Posterior vena cava (tissue), 2 donors: ENCODE measurements at regions of chr17 and their contacts with region 1.

Region 1: DNA sequence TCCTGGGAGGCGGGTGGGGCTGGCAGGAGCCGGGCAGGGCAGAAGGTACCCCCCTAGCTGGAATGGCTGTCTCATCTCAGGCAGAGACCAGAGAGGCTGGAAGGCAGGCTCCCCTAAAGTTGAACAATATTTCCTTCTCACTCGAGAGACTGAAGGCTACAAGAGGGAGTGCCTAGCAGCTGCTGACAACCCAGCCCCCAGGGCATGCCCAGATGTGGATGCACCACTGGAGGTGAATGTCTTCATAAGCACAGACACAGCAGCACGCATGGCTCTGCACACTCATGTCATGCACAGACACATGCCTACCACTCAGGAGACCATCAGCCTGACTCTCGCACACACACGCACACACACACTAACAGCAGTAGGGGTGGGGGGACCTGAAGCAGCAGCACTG is 179.0 kb downstream of the CCT6B start:
- DNase-seq: no peak

Region 2: DNA sequence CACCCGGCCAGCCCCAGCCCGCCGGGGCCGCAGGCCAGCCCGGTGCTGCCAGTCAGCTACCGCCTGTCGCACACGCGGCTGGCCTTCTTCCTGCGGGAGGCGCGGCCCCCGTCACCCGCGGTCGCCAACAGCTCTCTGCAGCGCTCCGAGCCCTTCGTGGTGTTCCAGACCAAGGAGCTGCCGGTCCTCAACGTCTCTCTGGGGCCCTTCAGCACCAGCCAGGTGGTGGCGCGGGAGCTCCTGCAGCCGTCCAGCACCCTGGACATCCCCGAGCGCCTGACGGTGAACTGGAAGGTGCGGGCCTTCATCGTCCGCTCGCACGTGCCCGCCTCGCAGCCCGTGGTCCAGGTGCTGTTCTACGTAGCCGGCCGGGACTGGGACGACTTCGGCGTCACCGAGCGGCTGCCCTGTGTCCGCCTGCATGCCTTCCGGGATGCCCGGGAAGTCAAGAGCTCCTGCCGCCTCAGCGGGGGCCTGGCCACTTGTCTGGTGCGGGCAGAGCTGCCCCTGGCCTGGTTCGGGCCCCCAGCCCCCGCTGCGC is 156.1 kb before region 1 on chr17:
- intact Hi-C with region 1: no loop called
- DNase-seq: no peak

Region 3: GRCh38 chr17:34675605-34676004 is 106.7 kb before region 1 on chr17:
- intact Hi-C with region 1: no loop called
- DNase-seq: no peak

Region 4: GRCh38 chr17:34709151-34709754 is 73.0 kb before region 1 on chr17:
- intact Hi-C with region 1: no loop called
- DNase-seq: no peak

Region 5: DNA sequence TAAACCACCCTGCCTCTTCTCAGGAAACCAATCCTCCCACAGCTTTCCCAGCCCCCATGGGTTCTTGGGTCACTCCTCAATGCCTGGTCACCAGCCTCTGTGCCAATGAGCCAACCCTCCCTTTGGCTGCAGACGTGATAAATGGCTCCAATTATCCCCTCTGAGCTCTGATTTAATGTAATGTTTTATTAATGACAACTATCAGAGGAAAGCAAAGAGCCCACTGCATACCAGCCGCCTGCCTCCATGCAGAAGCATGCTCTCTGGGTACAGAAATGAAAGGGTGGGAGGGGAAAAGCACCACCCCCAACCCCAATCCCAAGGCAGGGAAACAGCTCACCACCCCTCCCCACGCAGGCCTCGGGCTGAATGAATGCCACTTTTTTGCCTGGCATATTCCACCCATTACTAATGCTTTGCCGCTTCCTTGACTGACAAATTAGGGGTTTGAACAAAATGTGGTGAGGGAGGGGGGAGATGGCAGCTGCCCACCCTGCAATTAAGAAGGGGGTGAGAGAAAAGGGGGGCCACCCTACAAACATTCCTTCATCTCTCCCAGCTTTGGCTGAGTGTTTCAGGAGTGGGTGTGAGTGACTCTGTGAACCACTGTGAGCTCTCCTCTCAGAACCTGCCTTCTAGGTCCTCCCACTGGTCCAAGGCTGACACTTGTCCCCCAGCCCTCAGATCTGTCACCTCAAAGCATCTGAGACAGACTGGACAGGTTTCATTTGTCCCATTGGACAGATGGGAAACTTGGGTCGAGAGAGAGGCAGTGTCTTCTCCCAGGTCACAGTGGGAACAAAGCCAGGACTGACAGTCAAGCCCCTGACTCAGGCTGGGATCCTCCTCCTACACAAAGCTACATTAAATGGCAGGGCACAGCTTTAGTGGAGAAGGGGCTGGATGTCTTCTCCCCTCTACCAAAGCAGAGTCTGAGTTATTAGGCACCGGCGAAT is 41.4 kb before region 1 on chr17:
- intact Hi-C with region 1: loop called in 1 of 2 experiments (anchors 1 kb)
- DNase-seq: no peak

Region 6: GRCh38 chr17:34826332-34826731 is 44.1 kb after region 1 on chr17:
- intact Hi-C with region 1: no loop called
- DNase-seq: no peak